Transverse colon (tissue), 4 donors: ENCODE measurements at regions of chr3 and their contacts with region 1.

Region 1: GRCh38 chr3:132857317-132857716 is 135.1 kb upstream of the NPHP3 start:
- DNase-seq: no peak
- H3K4me3 ChIP-seq: no peak overlapping the region
- H3K27ac ChIP-seq: no peak overlapping the region
- H3K4me1 ChIP-seq: no peaks in the 10 kb centered on the region
- H3K27me3 ChIP-seq: no peaks in the 10 kb centered on the region
- CTCF ChIP-seq: no peak
- EP300 ChIP-seq: no peak
- POLR2A ChIP-seq: no peak

Region 2: DNA sequence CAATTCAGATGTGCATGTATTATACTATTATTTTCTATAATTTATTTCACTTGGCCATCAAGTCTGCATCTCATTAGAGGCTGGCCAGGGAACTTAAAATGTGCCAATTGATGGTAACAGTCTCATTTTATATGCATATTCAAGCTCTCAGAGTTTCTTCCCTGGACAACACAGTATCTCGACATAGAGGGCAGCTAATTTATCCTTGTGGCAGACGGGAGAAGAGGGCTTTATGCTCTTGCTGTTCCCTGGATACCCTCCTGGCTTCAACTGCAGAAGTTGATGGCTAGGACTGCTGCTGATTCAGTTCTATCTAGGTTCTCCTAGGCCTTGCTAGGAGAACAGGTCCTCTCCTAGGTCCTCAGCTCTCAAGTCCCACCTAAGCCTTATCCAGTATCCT is 36.0 kb before region 1 on chr3:
- in situ Hi-C with region 1: no loop called
- intact Hi-C with region 1: loop called (anchors 2 kb)
- DNase-seq: no peak
- H3K4me3 ChIP-seq: no peak overlapping the region
- H3K27ac ChIP-seq: no peak overlapping the region
- H3K4me1 ChIP-seq: no peaks in the 10 kb centered on the region
- H3K27me3 ChIP-seq: no peaks in the 10 kb centered on the region
- CTCF ChIP-seq: no peak
- EP300 ChIP-seq: no peak
- POLR2A ChIP-seq: no peak